CD8-positive, alpha-beta T cell (primary cell): ENCODE measurements at regions of chr7 and their contacts with region 1.

Region 1: GRCh38 chr7:130242198-130243014 is 24.3 kb upstream of the CPA2 start:
- DNase-seq: peak; percentile 21 to 79 (median 58)
- ATAC-seq: peak; percentile 85
- H3K4me3 ChIP-seq: no peak overlapping the region
- H3K4me3 Mint-ChIP-seq: no peak overlapping the region
- H3K27ac ChIP-seq: no peak overlapping the region
- H3K27ac Mint-ChIP-seq: no peak overlapping the region
- H3K4me1 ChIP-seq: no peaks in the 10 kb centered on the region
- H3K4me1 Mint-ChIP-seq: peaks cover 8% of the 10 kb centered on the region
- H3K27me3 ChIP-seq: peaks cover 0 to 6% of the 10 kb centered on the region in 2 experiments
- H3K27me3 Mint-ChIP-seq: no peaks in the 10 kb centered on the region
- CTCF ChIP-seq: peak; percentile 78

Region 2: DNA sequence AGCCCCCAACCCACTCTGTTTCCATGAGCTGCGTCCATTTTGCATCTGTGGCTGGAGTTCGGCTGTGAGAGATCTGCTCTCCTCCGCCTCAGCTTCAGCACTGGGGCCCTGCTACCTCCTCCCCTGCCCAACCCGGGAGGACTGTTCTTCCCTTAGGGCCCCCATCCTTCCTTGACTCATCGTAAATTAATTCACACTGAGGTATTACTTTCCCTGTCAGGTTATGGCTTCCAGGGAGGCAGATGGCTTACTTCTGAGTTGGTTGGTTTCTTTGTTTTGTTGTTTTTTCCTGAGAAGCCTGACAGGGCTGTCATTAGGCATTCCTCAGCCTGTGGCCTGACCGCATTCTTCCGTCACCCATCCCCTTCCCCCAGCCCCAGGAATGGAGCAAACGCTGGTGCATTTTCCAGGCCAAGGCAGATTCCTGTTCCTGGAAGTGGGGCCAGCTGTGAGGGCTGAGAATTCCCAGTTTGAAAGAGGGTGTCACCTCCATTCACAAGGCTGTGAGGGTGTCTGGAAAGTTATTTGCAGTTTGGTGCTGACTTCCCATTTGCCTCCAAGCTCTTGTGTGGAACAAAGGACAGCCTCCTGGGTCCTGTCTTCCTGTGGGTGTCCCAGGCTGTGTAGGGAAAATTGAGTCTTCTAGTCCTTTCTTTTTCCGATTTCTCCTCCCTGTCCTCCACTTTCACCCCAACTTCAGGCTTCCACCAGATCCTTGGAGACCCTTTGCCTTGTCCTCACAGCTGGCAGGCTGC is 113.9 kb after region 1 on chr7:
- CTCF ChIA-PET with region 1: no interaction called
- POLR2A ChIA-PET with region 1: no interaction called
- intact Hi-C with region 1: loop called in 1 of 2 experiments (anchors 5 kb)
- DNase-seq: no peak
- ATAC-seq: no peak
- H3K4me3 ChIP-seq: no peak overlapping the region
- H3K4me3 Mint-ChIP-seq: no peak overlapping the region
- H3K27ac ChIP-seq: no peak overlapping the region
- H3K27ac Mint-ChIP-seq: no peak overlapping the region
- H3K4me1 ChIP-seq: no peaks in the 10 kb centered on the region
- H3K4me1 Mint-ChIP-seq: peaks cover 2% of the 10 kb centered on the region
- H3K27me3 ChIP-seq: no peaks in the 10 kb centered on the region
- H3K27me3 Mint-ChIP-seq: no peaks in the 10 kb centered on the region
- CTCF ChIP-seq: no peak

Region 3: DNA sequence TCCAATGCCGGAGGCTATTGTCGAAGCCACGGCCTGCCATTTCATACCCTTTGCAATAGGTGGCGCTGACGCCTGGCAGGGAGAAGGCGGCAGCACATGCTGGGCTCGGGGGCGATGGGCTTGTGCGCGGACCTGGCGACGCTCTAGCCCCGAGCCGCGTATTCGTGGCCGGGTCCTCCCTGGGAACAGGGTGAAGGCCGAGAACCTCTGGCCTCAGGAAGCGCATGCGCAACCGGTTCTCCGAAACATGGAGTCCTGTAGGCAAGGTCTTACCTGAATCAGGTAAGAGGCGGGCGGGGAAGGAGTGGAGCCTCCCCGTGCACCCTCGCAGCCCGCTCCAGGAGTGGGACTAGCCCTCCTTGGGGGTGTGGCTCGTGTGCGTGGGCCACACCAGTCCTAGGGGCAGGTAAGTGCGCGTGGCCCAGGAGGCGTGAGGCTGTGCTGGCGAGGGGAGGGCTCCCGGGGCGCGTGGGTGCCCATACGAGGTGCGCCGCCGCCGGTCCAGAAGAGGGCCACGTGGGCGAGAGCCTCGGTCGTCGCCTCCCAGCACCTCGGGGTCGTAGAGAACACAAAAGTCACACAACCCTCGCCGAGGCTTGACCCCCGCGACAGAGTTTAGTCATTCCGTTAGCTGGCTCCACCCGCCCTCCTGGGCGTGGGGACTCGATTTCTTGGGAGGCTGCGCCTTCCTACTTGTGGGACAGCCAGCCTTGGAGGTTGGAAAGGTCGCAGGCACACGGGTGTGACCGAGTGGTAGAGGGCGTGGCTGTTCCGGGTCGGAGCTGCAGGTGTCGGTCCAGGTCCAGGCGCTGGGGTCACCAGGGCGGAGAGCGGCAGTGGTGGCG is 243.9 kb after region 1 on chr7:
- CTCF ChIA-PET with region 1: interaction called, 5 read pairs
- POLR2A ChIA-PET with region 1: no interaction called
- intact Hi-C with region 1: loop called (anchors 1 kb)
- DNase-seq: peak; percentile 21 to 79 (median 67)
- ATAC-seq: peak; percentile 83
- H3K4me3 ChIP-seq: peak overlapping the region; percentile 63 to 86
- H3K4me3 Mint-ChIP-seq: peak overlapping the region; percentile 93
- H3K27ac ChIP-seq: peak overlapping the region in 1 of 2 experiments; percentile 31
- H3K27ac Mint-ChIP-seq: peak overlapping the region; percentile 86
- H3K4me1 ChIP-seq: peaks cover 10% of the 10 kb centered on the region
- H3K4me1 Mint-ChIP-seq: peaks cover 33% of the 10 kb centered on the region
- H3K27me3 ChIP-seq: peaks cover 0 to 3% of the 10 kb centered on the region in 2 experiments
- H3K27me3 Mint-ChIP-seq: peaks cover 20% of the 10 kb centered on the region
- CTCF ChIP-seq: peak; percentile 95

Region 4: GRCh38 chr7:130695840-130696239 is 453.4 kb after region 1 on chr7:
- CTCF ChIA-PET with region 1: interaction called, 3 read pairs
- POLR2A ChIA-PET with region 1: no interaction called
- intact Hi-C with region 1: loop called in 1 of 2 experiments (anchors 1 kb)
- DNase-seq: peak in 2 of 9 experiments; percentile 7 to 33
- ATAC-seq: no peak
- H3K4me3 ChIP-seq: no peak overlapping the region
- H3K4me3 Mint-ChIP-seq: no peak overlapping the region
- H3K27ac ChIP-seq: no peak overlapping the region
- H3K27ac Mint-ChIP-seq: no peak overlapping the region
- H3K4me1 ChIP-seq: no peaks in the 10 kb centered on the region
- H3K4me1 Mint-ChIP-seq: no peaks in the 10 kb centered on the region
- H3K27me3 ChIP-seq: no peaks in the 10 kb centered on the region
- H3K27me3 Mint-ChIP-seq: no peaks in the 10 kb centered on the region
- CTCF ChIP-seq: no peak

Region 5: DNA sequence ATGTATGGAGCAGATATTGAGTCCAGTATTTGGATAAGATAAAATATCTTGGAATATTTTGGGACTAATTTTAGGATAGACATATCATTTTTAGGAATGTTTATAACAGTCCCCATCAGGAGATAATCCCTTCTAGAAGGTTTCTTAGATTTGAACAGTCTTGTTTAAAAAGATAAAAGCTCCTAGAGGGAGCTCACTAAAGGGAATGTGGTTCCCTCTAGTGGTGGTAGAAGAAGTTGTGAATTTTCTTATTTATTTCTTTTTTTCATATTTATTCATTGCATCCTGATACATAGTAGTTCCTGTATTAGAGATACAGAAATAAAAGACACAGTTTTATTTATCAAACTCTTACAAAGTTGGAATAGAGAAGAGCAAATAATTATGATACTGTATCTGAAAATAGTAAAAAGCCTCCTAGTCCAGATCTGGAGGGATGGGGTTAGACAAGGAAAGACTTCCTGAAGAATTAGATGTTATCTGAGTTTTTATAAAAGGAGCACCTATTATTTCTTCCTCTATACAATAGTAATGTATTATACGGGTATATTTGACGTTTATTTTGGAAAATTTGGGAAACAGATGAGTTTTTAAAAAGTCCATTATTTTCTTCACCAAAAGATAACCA is 516.1 kb after region 1 on chr7:
- CTCF ChIA-PET with region 1: interaction called, 10 read pairs
- POLR2A ChIA-PET with region 1: no interaction called
- intact Hi-C with region 1: loop called (anchors 1 kb)
- DNase-seq: peak in 2 of 9 experiments; percentile 57 to 71
- ATAC-seq: peak; percentile 56
- H3K4me3 ChIP-seq: no peak overlapping the region
- H3K4me3 Mint-ChIP-seq: no peak overlapping the region
- H3K27ac ChIP-seq: no peak overlapping the region
- H3K27ac Mint-ChIP-seq: no peak overlapping the region
- H3K4me1 ChIP-seq: no peaks in the 10 kb centered on the region
- H3K4me1 Mint-ChIP-seq: no peaks in the 10 kb centered on the region
- H3K27me3 ChIP-seq: no peaks in the 10 kb centered on the region
- H3K27me3 Mint-ChIP-seq: peaks cover 6% of the 10 kb centered on the region
- CTCF ChIP-seq: peak; percentile 84

Region 6: DNA sequence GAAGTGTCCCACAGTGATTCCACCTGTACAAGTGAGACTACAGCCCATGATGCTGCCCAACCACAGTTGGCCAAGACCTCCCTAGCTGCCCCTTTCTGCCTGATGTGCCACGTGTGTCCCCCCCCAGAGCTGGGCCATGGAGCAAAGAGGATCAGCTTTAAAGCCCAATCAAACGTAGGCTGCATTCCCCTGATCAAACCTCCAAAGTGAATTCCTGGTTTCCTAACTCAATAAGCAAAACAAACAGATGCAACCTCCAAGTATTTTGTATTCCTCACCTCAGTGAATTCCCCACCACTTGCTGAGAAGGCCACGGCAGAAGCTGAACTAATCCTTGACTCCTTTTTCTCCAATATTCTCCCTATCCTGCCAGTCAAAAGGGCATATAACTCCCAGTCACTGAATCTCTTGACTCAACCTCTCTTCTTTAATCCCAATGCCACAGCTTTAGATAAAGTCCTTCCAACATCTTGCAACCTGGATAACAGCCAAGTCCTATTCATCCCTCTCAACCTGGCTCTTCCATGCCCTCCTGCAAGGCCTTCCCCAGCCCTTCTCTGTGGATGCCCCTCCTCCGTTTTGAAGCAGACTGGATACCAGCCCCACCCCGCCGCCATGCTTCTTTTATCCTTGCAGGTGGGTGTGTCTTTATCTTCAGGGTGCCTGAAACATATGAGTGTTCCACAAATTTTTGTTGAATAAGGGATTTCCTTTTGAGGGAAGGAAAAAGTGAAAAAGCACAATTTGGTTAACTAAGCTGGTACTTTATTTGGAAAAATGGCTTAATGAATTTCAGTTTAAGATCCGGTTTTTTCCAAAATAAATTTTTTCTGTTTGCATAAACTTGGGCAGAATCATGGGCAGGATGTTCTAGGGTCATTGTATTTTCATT is 800.1 kb after region 1 on chr7:
- CTCF ChIA-PET with region 1: no interaction called
- POLR2A ChIA-PET with region 1: no interaction called
- intact Hi-C with region 1: no loop called
- DNase-seq: no peak
- ATAC-seq: no peak
- H3K4me3 ChIP-seq: no peak overlapping the region
- H3K4me3 Mint-ChIP-seq: no peak overlapping the region
- H3K27ac ChIP-seq: peak overlapping the region in 1 of 2 experiments; percentile 30
- H3K27ac Mint-ChIP-seq: peak overlapping the region; percentile 57
- H3K4me1 ChIP-seq: peaks cover 41% of the 10 kb centered on the region
- H3K4me1 Mint-ChIP-seq: peaks cover 71% of the 10 kb centered on the region
- H3K27me3 ChIP-seq: no peaks in the 10 kb centered on the region
- H3K27me3 Mint-ChIP-seq: no peaks in the 10 kb centered on the region
- CTCF ChIP-seq: no peak

Region 7: DNA sequence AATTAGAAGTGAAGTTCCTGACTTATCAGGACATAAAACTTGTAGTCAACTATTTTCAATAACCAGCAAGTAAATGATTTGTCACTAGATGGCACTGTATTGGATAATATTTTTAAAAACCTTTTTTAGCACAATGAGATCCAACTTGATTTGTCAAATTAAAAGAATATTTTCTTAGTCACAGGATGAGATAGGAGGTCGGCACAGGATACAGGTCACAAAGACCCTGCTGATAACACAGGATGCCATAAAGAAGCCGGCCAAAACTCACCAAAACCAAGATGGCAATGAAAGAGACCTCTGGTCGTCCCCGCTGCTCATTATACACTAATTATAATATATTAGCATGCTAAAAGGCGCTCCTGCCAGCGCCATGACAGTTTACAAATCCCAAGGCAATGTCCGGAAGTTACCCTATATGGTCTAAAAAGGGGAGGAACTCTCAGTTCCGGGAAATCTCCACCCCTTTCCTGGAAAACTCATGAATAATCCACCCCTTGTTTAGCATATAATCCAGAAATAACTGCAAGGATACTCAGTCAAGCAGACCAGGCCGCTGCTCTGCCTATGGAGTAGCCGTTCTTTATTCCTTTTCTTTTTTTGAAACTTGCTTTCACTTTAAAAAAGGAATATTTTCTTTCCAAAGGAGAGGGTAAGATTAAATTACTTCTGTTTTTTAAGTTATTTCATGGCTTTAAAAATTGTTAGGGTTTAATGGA is 829.5 kb after region 1 on chr7:
- CTCF ChIA-PET with region 1: no interaction called
- POLR2A ChIA-PET with region 1: no interaction called
- intact Hi-C with region 1: no loop called
- DNase-seq: no peak
- ATAC-seq: no peak
- H3K4me3 ChIP-seq: no peak overlapping the region
- H3K4me3 Mint-ChIP-seq: no peak overlapping the region
- H3K27ac ChIP-seq: no peak overlapping the region
- H3K27ac Mint-ChIP-seq: no peak overlapping the region
- H3K4me1 ChIP-seq: peaks cover 64% of the 10 kb centered on the region
- H3K4me1 Mint-ChIP-seq: peaks cover 84% of the 10 kb centered on the region
- H3K27me3 ChIP-seq: no peaks in the 10 kb centered on the region
- H3K27me3 Mint-ChIP-seq: no peaks in the 10 kb centered on the region
- CTCF ChIP-seq: peak; percentile 50